RWPE1 (cell line): ENCODE measurements at regions of chr6 and their contacts with region 1.

Region 1: GRCh38 chr6:63352587-63353285 is 33.0 kb upstream of the LGSN start:
- DNase-seq: peak; percentile 30
- H3K27ac ChIP-seq: no peak overlapping the region
- CTCF ChIP-seq: peak; percentile 80

Region 2: DNA sequence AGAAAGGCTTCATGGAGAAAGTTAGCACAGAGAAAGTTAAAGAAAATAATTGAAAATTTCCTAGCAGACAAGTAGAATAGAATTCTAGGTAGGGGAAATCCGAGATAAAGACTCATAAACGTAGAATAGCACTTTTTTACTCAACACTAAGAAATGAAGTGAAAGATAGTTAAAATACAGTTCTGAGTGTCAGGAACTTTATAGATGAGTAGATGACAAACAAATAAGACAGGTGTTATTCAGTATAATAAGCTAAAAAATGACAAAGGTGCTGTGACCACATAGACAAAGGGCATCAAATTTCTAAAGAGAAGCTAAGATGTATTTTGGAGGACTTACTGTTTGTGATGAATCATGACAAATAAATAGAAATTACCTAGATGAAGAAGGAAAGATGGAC is 128.6 kb before region 1 on chr6:
- CTCF ChIA-PET with region 1: no interaction called
- POLR2A ChIA-PET with region 1: no interaction called
- DNase-seq: no peak
- H3K27ac ChIP-seq: no peak overlapping the region
- CTCF ChIP-seq: no peak

Region 3: DNA sequence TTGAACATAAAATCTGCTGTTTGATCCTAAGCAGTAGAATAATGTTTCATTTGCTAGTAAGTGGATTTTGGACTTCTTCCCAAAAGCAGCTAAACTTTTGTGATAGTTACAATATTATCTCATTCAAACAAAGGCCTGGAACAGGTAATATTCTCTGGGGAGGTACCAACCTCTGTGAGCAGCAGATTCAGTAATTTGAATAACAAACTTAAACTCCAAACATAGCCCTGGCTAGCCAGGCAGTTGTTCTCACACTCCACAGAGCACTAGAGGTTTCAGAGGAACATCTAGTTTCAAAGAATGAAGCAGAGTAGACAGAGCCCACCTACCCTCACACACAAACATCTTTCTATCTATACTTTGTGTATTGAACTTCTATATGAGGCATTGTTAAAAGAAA is 73.8 kb before region 1 on chr6:
- CTCF ChIA-PET with region 1: no interaction called
- POLR2A ChIA-PET with region 1: no interaction called
- DNase-seq: no peak
- H3K27ac ChIP-seq: no peak overlapping the region
- CTCF ChIP-seq: no peak

Region 4: GRCh38 chr6:63573140-63573898 is 220.6 kb after region 1 on chr6:
- CTCF ChIA-PET with region 1: interaction called, 14 read pairs
- POLR2A ChIA-PET with region 1: interaction called, 4 read pairs
- DNase-seq: peak; percentile 90
- H3K27ac ChIP-seq: peak overlapping the region; percentile 99
- CTCF ChIP-seq: no peak

Region 5: GRCh38 chr6:63802606-63803206 is 450.0 kb after region 1 on chr6:
- CTCF ChIA-PET with region 1: interaction called, 11 read pairs
- POLR2A ChIA-PET with region 1: no interaction called
- DNase-seq: no peak
- H3K27ac ChIP-seq: no peak overlapping the region
- CTCF ChIP-seq: peak; percentile 80